HepG2 (cell line): ENCODE measurements at regions of chr16 and their contacts with region 1.

Region 1: GRCh38 chr16:67159593-67160406 is at the starts of genes FBXL8 and TRADD:
- DNase-seq: peak; percentile 58
- ATAC-seq: peak; percentile 79
- H3K4me3 ChIP-seq: peak within 1 kb of the TSS; percentile 91 to 94 (median 93)
- H3K27ac ChIP-seq: peak within 1 kb of the TSS; percentile 54
- H3K4me1 ChIP-seq: peaks cover 54% of the 10 kb centered on the region
- H3K27me3 ChIP-seq: peaks cover 4 to 5% of the 10 kb centered on the region in 2 experiments; a peak in 2 of 5 replicates
- CTCF ChIP-seq: peak; percentile 77
- EP300 ChIP-seq: 0 out of 4 replicates have a peak, but pooled peaks of 1 of the 2 experiments have one; percentile 3
- POLR2A ChIP-seq: peak; percentile 44 to 81; a peak in 3 of 4 replicates
- RAD21 ChIP-seq: peak; percentile 42
- total RNA-seq, gene FBXL8: 1.5 and 3.9 TPM in 2 replicates
- total RNA-seq, gene TRADD: 6.2 and 7.8 TPM in 2 replicates

Region 2: GRCh38 chr16:66894948-66895688 is 264.7 kb before region 1 on chr16:
- CTCF ChIA-PET with region 1: no interaction called
- POLR2A ChIA-PET with region 1: no interaction called
- in situ Hi-C with region 1: no loop called
- intact Hi-C with region 1: loop called (anchors 10 kb)
- DNase-seq: peak; percentile 80
- ATAC-seq: peak; percentile 90
- H3K4me3 ChIP-seq: no peak overlapping the region; a peak in 1 of 6 replicates
- H3K27ac ChIP-seq: no peak overlapping the region
- H3K4me1 ChIP-seq: peaks cover 63% of the 10 kb centered on the region
- H3K27me3 ChIP-seq: peaks cover 0 to 2% of the 10 kb centered on the region in 2 experiments; a peak in 1 of 5 replicates
- CTCF ChIP-seq: peak; percentile 100
- EP300 ChIP-seq: no peak
- POLR2A ChIP-seq: no peak
- RAD21 ChIP-seq: peak; percentile 99

Region 3: GRCh38 chr16:66977341-66978113 is 182.3 kb before region 1 on chr16:
- CTCF ChIA-PET with region 1: interaction called, 15 read pairs
- POLR2A ChIA-PET with region 1: interaction called, 3 read pairs
- in situ Hi-C with region 1: loop called (anchors 5 kb)
- intact Hi-C with region 1: loop called (anchors 1 kb)
- DNase-seq: peak; percentile 82
- ATAC-seq: peak; percentile 93
- H3K4me3 ChIP-seq: peak overlapping the region in 1 of 3 experiments; percentile 36; a peak in 1 of 6 replicates
- H3K27ac ChIP-seq: no peak overlapping the region
- H3K4me1 ChIP-seq: peaks cover 66% of the 10 kb centered on the region
- H3K27me3 ChIP-seq: peaks cover 2 to 9% of the 10 kb centered on the region in 2 experiments; a peak in 3 of 5 replicates
- CTCF ChIP-seq: peak; percentile 100
- EP300 ChIP-seq: no peak
- POLR2A ChIP-seq: no peak; a peak in 1 of 4 replicates
- RAD21 ChIP-seq: peak; percentile 100

Region 4: GRCh38 chr16:67109407-67110135 is 50.2 kb before region 1 on chr16 and contains the start of gene PHAF1:
- CTCF ChIA-PET with region 1: interaction called, 20 read pairs
- POLR2A ChIA-PET with region 1: interaction called, 21 read pairs
- in situ Hi-C with region 1: no loop called
- intact Hi-C with region 1: loop called (anchors 2 kb)
- DNase-seq: peak; percentile 86
- ATAC-seq: peak; percentile 79
- H3K4me3 ChIP-seq: peak within 1 kb of the TSS; percentile 81 to 99 (median 83)
- H3K27ac ChIP-seq: peak within 1 kb of the TSS; percentile 90
- H3K4me1 ChIP-seq: peaks cover 48% of the 10 kb centered on the region
- H3K27me3 ChIP-seq: no peaks in the 10 kb centered on the region; a peak in 1 of 5 replicates
- CTCF ChIP-seq: peak; percentile 31; the same call in 1 of the 2 replicates
- EP300 ChIP-seq: peak in 1 of 2 experiments; percentile 17; a peak in 2 of 4 replicates
- POLR2A ChIP-seq: peak; percentile 98 to 99
- RAD21 ChIP-seq: peak; percentile 38
- total RNA-seq, gene PHAF1: 48.3 and 53.6 TPM in 2 replicates

Region 5: GRCh38 chr16:67173808-67174705 is 14.3 kb after region 1 on chr16:
- CTCF ChIA-PET with region 1: interaction called, 4 read pairs
- POLR2A ChIA-PET with region 1: interaction called, 54 read pairs
- in situ Hi-C with region 1: no loop called
- intact Hi-C with region 1: no loop called
- DNase-seq: peak; percentile 82
- ATAC-seq: peak; percentile 82
- H3K4me3 ChIP-seq: peak overlapping the region; percentile 52 to 75 (median 59)
- H3K27ac ChIP-seq: no peak overlapping the region
- H3K4me1 ChIP-seq: peaks cover 63% of the 10 kb centered on the region
- H3K27me3 ChIP-seq: peaks cover 0 to 2% of the 10 kb centered on the region in 2 experiments; a peak in 2 of 5 replicates
- CTCF ChIP-seq: peak; percentile 85
- EP300 ChIP-seq: no peak
- POLR2A ChIP-seq: peak in 1 of 2 experiments; percentile 11; a peak in 1 of 4 replicates
- RAD21 ChIP-seq: peak; percentile 82